ENCODE measurements at regions of chr1 and their contacts with region 1.

Region 1: DNA sequence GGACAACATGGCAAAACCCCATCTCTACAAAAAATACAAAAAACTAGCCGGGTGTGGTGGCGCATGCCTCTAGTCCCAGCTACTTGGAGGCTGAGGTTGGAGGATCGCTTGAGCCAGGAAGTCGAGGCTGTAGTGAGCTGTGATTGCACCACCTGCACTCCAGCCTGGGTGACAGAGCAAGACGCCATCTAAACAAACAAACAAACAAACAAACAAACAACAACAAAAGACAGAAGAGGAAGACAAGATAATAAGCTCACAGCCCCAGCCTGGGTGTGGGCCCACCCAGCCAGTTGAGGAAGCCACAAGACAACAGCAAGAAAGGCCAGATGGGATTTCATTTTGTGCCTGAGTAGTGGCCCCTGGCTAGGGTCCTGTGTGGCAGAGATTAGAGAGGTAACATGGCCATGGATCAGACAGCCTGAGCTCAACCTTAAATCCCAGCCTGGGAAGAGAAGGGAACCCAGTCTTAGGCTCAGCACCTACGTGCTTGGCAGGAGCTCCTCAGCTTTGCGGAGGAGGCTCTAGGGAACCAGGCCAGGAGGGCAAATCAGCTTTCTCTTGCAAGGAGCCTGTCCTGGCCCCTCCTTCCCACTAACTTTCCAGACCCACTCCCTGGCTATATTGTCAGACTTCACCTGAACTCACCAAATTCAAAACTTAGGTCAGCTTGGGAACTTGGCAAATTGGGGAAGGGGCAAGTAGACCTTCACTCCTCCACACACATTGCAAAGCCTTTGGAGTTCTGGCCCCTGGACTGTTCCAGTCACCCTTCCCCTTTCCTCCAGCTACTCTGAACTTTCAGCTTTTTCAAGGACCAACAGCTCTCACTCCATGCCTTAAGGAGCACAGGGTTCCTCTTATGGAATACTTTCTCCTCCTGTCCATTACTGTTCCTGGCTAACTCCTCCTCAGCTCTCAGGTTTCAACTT is 5.1 kb upstream of the BEST4 start:
- DNase-seq: no peak
- ATAC-seq: no peak
- H3K4me3 ChIP-seq: no peak overlapping the region
- H3K27ac ChIP-seq: no peak overlapping the region
- H3K4me1 ChIP-seq: no peaks in the 10 kb centered on the region
- H3K27me3 ChIP-seq: no peaks in the 10 kb centered on the region
- CTCF ChIP-seq: no peak
- EP300 ChIP-seq: no peak
- POLR2A ChIP-seq: no peak
- RAD21 ChIP-seq: no peak

Region 2: DNA sequence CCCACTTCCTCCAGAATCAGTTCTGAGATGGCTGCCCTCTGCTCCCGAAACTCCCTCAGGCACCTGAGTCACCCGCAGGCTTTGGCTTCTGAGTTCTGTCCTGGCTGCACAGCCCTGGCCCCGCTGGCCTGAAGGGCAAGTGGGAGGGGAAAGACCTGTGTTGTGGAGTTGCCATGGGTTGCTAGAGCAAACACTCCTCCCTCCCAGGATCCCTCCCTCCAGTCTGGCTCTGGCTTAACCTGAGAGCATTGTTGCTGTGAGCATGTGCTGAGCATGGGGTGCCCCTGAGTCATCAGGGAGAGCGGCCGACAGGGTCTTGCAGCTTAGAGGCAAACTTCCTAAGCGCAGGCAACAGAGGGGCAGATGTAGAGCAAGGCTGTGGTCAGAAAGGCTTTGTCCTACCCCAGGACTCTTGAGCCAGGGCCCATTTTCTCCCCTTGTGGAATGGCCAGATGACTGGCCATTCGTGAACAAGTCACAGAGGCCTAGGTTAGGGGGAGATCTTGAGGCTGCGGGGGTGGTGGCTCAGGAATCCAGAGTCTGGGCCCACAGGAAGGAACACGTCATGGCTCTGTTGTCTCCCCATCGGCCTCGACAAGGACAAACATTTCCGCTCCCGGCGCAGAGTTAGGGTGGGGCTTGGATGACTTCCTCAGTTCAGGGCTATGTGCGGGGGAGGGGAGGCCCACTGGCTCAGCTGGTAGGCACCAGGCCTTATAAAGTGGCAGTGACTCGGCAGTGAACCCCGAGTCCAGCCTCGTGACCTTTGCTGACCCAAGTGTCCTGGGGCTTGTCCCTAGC is 14.4 kb after region 1 on chr1 and contains the start of gene DYNLT4:
- CTCF ChIA-PET with region 1: interaction called, 6 read pairs
- POLR2A ChIA-PET with region 1: no interaction called
- RAD21 ChIA-PET with region 1: no interaction called
- SMC1A ChIA-PET with region 1: interaction called, 10 read pairs
- in situ Hi-C with region 1: no loop called
- intact Hi-C with region 1: no loop called
- DNase-seq: peak; percentile 65
- ATAC-seq: peak; percentile 64
- H3K4me3 ChIP-seq: no peak within 1 kb of the TSS
- H3K27ac ChIP-seq: peak within 1 kb of the TSS; percentile 95
- H3K4me1 ChIP-seq: peaks cover 53% of the 10 kb centered on the region
- H3K27me3 ChIP-seq: no peaks in the 10 kb centered on the region
- CTCF ChIP-seq: no peak
- EP300 ChIP-seq: peak in 1 of 2 experiments; percentile 44; a peak in 2 of 4 replicates
- POLR2A ChIP-seq: no peak; the same call in none of the 2 replicates
- RAD21 ChIP-seq: no peak
- polyA plus RNA-seq, gene DYNLT4: not detected